PC-3 (cell line): ENCODE measurements at regions of chr10 and their contacts with region 1.

Region 1: DNA sequence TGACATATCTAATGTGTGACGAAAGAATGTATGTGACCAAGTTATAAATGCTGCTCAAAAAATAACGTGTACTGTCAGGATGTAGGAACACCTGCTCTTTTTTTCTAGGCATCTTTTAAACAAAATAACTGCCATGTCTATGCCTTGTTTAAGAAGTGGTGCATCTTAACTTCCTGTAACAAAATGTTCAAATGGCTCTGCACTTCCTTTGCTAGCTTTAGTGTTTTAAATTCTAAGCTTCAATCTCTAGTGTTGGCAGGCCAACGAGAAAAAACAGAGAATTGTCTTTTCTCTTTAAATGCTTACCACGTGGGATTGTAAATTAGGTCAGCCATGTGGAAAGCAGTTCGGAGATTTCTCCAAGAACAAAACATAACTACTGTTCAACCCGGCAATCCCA is 14.6 kb upstream of the PDSS1 start:
- DNase-seq: no peak
- ATAC-seq: no peak
- H3K4me3 ChIP-seq: no peak overlapping the region
- H3K27ac ChIP-seq: no peak overlapping the region
- H3K4me1 ChIP-seq: no peaks in the 10 kb centered on the region
- H3K27me3 ChIP-seq: no peaks in the 10 kb centered on the region
- CTCF ChIP-seq: no peak

Region 2: GRCh38 chr10:26665080-26666048 is 17.6 kb before region 1 on chr10:
- CTCF ChIA-PET with region 1: no interaction called
- POLR2A ChIA-PET with region 1: no interaction called
- intact Hi-C with region 1: no loop called
- DNase-seq: no peak
- ATAC-seq: no peak
- H3K4me3 ChIP-seq: no peak overlapping the region
- H3K27ac ChIP-seq: no peak overlapping the region
- H3K4me1 ChIP-seq: no peaks in the 10 kb centered on the region
- H3K27me3 ChIP-seq: peaks cover 19% of the 10 kb centered on the region; the same call in 1 of the 2 replicates
- CTCF ChIP-seq: no peak

Region 3: GRCh38 chr10:26790221-26790995 is 107.5 kb after region 1 on chr10:
- CTCF ChIA-PET with region 1: no interaction called
- POLR2A ChIA-PET with region 1: no interaction called
- intact Hi-C with region 1: no loop called
- DNase-seq: peak; percentile 28
- ATAC-seq: no peak; the same call in 1 of the 2 replicates
- H3K4me3 ChIP-seq: no peak overlapping the region
- H3K27ac ChIP-seq: no peak overlapping the region
- H3K4me1 ChIP-seq: no peaks in the 10 kb centered on the region
- H3K27me3 ChIP-seq: no peaks in the 10 kb centered on the region
- CTCF ChIP-seq: no peak

Region 4: DNA sequence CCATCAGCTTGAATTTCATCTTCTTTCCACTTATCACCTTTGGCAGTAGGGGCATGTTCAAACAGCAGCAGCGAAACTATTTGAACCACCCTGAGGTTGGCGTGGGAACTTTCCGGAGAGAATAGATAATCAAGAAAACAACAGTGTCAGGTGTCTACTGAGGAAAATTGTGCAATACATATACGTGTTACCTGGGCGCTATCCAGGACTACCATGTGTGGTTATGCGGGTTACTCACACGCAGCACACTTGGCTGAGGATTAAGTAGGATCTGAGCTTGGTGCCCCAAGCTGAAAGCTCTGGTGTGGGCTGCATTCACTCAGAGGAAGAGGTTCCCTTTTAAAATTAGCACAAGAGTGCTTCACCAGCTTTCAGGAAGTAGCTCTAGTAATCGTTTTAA is 186.6 kb after region 1 on chr10:
- CTCF ChIA-PET with region 1: no interaction called
- POLR2A ChIA-PET with region 1: interaction called, 10 read pairs
- intact Hi-C with region 1: no loop called
- DNase-seq: peak; percentile 64
- ATAC-seq: no peak
- H3K4me3 ChIP-seq: no peak overlapping the region
- H3K27ac ChIP-seq: no peak overlapping the region
- H3K4me1 ChIP-seq: no peaks in the 10 kb centered on the region
- H3K27me3 ChIP-seq: no peaks in the 10 kb centered on the region
- CTCF ChIP-seq: no peak